Activated naive CD4-positive, alpha-beta T cell treated with anti-CD3 and anti-CD28 coated beads for 36 hours (primary cell): ENCODE measurements at regions of chr11 and their contacts with region 1.

Region 1: GRCh38 chr11:36409152-36409816 is 100.8 kb downstream of the TRAF6 start:
- DNase-seq: peak; percentile 68
- H3K4me3 Mint-ChIP-seq: peak overlapping the region; percentile 10
- H3K27ac Mint-ChIP-seq: peak overlapping the region; percentile 87
- H3K4me1 Mint-ChIP-seq: peaks cover 44% of the 10 kb centered on the region
- H3K27me3 Mint-ChIP-seq: no peaks in the 10 kb centered on the region

Region 2: GRCh38 chr11:36354221-36355003 is 54.9 kb before region 1 on chr11:
- CTCF ChIA-PET with region 1: no interaction called
- intact Hi-C with region 1: loop called (anchors 1 kb)
- DNase-seq: no peak
- H3K4me3 Mint-ChIP-seq: no peak overlapping the region
- H3K27ac Mint-ChIP-seq: peak overlapping the region; percentile 16
- H3K4me1 Mint-ChIP-seq: peaks cover 49% of the 10 kb centered on the region
- H3K27me3 Mint-ChIP-seq: peaks cover 18% of the 10 kb centered on the region

Region 3: DNA sequence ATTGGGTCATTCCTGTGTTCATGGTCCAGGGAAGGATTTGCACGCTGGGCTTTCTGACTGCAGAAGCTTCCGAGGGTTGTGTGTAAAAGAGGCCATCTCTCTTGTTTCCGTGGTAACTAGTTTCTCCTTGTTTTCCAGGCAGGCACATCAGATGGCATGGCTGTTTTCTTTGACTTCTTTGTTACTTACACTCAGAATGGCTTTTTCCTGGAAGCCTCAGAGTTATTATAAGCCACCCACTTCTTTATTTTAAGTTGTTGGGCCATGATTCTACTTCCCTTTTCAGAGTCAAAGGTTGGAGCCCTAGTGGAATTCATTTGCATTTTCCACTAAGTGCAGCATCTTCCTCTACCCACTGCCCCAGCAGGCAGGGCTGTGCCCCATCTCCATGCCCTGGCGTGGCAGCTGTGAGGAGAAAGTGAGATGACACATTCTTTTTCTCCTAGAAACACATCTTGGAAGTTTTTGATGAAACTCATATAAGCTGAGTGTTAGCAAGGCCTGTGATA is 18.3 kb before region 1 on chr11:
- CTCF ChIA-PET with region 1: no interaction called
- intact Hi-C with region 1: loop called (anchors 1 kb)
- DNase-seq: peak; percentile 21
- H3K4me3 Mint-ChIP-seq: no peak overlapping the region
- H3K27ac Mint-ChIP-seq: peak overlapping the region; percentile 72
- H3K4me1 Mint-ChIP-seq: peaks cover 47% of the 10 kb centered on the region
- H3K27me3 Mint-ChIP-seq: peaks cover 6% of the 10 kb centered on the region

Region 4: DNA sequence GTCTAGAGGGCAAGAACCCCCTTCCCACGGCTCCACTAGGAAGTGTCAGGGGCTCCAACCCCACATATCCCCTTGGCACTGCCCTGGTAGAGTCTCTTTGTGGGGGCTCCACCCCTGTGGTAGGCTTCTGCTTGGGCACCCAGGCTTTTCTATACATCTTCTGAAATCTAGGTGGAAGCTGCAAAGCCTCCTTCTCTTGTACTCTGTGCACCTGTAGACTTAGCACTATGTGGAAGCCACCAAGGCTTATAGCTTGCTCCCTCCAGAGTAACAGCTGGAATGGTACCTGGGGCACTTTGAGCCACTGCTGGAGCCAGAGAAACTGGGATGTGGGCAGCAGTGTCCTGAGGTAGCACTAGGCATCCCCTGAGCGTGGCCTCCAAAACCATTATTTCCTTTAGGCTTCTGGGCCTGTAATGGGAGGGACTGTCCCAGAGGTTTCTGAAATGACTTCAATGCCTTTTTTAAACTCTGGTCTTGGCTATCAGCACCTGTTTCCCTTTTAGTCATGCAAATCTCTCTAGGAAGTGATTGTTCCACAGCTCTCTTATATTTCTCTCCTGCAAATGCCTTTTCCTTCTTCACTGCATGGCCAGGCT is 32.4 kb after region 1 on chr11:
- CTCF ChIA-PET with region 1: no interaction called
- intact Hi-C with region 1: loop called (anchors 1 kb)
- DNase-seq: peak; percentile 53
- H3K4me3 Mint-ChIP-seq: no peak overlapping the region
- H3K27ac Mint-ChIP-seq: no peak overlapping the region
- H3K4me1 Mint-ChIP-seq: peaks cover 12% of the 10 kb centered on the region
- H3K27me3 Mint-ChIP-seq: no peaks in the 10 kb centered on the region

Region 5: DNA sequence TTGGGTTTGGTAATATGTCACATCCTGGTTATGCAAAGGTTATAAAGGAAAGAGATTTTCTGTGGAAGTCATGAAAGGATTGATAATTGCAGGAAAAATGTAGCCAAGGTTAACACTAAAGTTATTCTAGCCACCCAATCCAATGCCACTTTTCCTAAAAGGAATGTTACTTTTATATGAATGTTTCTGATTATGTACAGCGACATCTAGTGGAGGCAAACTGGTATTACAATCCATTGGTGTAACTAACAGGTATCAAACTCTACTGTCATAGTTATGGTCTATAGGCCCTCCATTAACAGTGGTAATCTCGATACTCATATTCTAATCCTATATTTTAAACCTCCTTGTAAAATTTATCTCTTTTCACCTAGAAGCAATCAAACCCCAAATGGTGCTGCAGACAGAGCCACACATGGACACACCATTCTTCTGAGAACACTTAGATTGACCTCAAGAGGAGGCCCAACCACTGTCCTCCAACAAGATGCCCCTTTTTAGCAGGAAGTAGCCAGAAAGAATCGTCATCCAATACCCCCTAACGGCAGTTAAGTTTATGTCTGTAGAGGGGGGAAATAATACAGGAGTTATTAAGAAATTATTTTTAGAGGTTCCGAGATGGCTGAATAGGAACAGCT is 263.6 kb after region 1 on chr11:
- CTCF ChIA-PET with region 1: no interaction called
- intact Hi-C with region 1: no loop called
- DNase-seq: peak; percentile 14
- H3K4me3 Mint-ChIP-seq: no peak overlapping the region
- H3K27ac Mint-ChIP-seq: no peak overlapping the region
- H3K4me1 Mint-ChIP-seq: no peaks in the 10 kb centered on the region
- H3K27me3 Mint-ChIP-seq: peaks cover 21% of the 10 kb centered on the region